GM23248 (cell line): ENCODE measurements at regions of chr10 and their contacts with region 1.

Region 1: DNA sequence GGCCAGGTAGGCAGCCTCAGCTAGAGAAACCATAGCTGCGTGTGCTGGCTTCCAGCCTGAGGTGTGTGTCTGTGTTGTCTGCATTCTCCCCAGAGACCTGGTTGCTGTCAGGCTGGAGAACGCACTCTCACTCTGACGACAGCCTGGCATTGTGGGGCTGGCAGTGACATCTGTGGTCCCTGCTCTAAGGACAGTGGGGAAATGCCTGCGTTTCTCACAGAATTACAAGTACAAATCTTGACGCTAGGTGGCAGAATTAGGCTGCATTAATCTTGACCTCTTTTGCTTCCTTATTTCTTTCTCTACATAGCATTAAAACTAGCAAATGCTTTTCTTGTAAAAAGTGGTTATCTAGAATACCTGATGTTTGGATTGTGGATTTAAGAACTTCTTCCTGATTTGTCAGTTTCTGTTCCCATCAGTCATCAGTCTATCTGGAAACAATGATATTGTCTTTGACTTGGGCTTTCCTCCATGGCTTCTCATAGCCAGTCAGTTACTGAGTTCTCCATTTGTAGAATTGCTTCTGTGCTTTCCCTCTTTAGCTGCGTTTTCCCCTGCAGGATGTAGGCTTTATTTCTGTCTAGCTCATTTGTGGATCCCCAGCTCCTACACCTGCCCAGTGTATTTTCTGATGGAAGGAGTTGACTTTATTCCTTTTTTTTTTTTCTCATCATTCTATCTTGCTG is 86.0 kb downstream of the FANK1 start:
- DNase-seq: peak; percentile 79
- H3K4me3 ChIP-seq: no peak overlapping the region
- H3K27ac ChIP-seq: no peak overlapping the region
- H3K4me1 ChIP-seq: 0 out of 2 replicates have a peak, but pooled peaks cover 5% of the 10 kb centered on the region
- H3K27me3 ChIP-seq: no peaks in the 10 kb centered on the region

Region 2: DNA sequence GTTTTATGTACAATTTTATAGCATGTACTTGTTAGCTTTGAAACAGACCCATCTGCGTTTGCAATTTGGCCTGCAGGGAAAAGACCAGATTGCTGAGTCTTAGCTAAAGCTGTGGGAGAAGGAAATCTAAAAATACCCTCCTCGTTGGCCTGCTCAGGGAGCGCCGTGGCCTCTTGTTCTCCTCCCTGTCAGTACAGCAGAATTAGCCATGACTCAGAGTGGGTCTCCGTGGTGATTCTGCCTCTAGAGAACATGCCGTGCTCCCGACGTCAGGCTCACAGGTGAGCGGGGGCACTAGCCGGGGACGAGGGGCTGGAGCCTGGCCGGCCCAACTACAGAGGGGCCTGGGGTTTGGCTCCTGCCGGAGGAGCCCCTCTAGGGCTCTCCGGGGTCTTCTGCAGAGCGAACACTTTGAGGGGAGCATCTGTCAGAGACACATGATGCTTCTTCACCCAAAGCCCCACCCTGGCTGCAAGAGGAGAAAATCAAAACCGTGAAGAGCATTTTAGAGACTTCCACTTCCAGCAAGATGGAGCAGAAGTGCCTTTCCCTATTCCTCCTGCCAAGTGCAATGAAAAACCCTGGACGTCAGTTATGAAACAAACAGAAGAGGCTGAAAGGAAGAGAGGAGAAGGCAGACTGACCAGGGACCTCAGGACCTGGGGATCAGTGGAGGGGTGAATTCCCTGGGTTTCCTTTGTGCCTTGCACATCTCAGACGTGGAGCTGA is 1421.9 kb before region 1 on chr10:
- in situ Hi-C with region 1: no loop called
- DNase-seq: peak; percentile 82
- H3K4me3 ChIP-seq: no peak overlapping the region
- H3K27ac ChIP-seq: no peak overlapping the region
- H3K4me1 ChIP-seq: peaks cover 8% of the 10 kb centered on the region
- H3K27me3 ChIP-seq: no peaks in the 10 kb centered on the region

Region 3: DNA sequence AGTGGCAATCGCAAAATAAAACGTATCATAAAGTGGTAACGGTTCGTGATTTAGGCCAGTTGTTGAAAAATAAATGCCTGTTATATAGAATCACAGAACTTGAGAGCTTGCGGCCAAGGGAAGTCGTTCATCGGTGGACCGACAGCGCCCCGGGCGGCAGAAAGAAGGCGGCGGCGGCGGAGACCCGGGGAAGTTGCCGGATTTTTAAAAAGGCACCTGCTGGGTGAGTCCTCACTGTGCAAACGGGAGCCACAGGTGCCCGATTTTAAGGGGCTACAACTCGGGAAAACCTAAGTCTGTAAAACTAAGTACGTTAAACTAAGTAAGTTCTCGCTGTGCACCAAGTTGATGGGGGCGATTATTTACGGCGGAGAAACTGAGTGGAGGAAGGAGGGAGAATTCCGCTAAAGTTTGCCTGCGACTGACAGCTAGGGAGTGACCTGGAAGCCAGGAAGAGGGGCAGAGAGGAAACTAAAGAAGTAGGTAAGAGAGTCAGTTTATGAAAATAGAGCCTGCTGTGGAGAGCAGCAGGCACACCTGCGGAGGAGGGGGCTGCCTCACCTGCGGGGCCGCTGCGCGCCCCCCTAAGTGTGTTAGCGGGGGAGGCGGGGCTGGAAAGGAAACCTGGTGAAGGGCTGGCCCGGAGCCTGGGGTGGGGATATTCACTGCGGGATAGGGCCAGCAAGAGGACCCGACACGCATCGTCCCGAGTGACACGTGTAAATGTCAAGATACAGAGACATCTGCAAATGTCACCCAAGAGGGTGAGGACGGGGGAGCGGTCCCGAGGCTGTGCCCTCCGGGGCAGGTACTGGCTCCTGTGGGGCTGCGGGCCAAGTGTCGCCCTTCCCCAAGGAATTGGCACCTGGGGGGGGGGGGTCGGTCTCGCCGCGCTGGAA is 404.9 kb after region 1 on chr10:
- in situ Hi-C with region 1: loop called (anchors 10 kb)
- DNase-seq: peak; percentile 93
- H3K4me3 ChIP-seq: peak overlapping the region; percentile 88
- H3K27ac ChIP-seq: peak overlapping the region; percentile 71
- H3K4me1 ChIP-seq: peaks cover 48% of the 10 kb centered on the region
- H3K27me3 ChIP-seq: no peaks in the 10 kb centered on the region

Region 4: GRCh38 chr10:126504063-126504739 is 521.8 kb after region 1 on chr10:
- in situ Hi-C with region 1: loop called (anchors 10 kb)
- DNase-seq: peak; percentile 77
- H3K4me3 ChIP-seq: no peak overlapping the region
- H3K27ac ChIP-seq: no peak overlapping the region
- H3K4me1 ChIP-seq: peaks cover 41% of the 10 kb centered on the region
- H3K27me3 ChIP-seq: no peaks in the 10 kb centered on the region

Region 5: GRCh38 chr10:126749015-126749655 is 766.7 kb after region 1 on chr10:
- in situ Hi-C with region 1: loop called (anchors 25 kb)
- DNase-seq: peak; percentile 86
- H3K4me3 ChIP-seq: no peak overlapping the region
- H3K27ac ChIP-seq: no peak overlapping the region
- H3K4me1 ChIP-seq: no peaks in the 10 kb centered on the region
- H3K27me3 ChIP-seq: peaks cover 20% of the 10 kb centered on the region; the same call in 1 of the 2 replicates